Calu3 (cell line): ENCODE measurements at regions of chr4 and their contacts with region 1.

Region 1: DNA sequence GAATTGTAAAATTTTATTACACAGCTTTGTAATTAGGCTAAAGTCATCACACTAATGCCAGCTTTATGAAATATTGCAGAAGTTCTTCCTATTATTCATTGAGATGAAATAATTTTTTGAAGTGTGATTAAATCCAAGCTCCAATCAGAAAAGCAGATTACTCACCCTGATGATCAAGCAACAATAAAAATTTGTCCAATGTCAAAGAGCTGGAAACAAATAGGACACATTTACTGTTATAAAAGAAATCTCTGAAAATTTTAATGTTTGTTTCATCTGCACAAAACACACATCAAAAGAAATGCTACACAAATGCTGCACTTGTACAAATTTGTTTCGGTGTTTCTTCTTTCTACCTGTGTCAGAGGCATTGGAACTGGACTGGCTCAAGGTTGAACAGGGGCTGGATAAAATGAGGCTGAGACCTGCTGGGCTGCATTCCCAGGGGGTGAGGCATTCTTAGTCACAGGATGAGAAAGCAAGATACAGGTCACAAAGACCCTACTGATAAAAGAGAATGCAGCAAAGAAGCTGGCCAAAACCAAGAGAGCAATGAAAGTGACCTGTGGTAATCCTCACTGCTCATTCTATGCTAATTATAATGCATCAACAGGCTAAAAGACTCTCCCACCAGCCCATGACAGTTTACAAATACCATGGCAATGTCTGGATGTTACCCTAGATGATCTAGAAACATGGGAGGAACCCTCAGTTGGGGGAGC is 78.3 kb downstream of the GASK1B start:
- DNase-seq: peak; percentile 83
- H3K4me3 Mint-ChIP-seq: peak overlapping the region; percentile 53
- H3K27ac Mint-ChIP-seq: peak overlapping the region; percentile 75
- H3K4me1 Mint-ChIP-seq: peaks cover 9% of the 10 kb centered on the region
- H3K27me3 Mint-ChIP-seq: no peaks in the 10 kb centered on the region
- CTCF ChIP-seq: no peak

Region 2: DNA sequence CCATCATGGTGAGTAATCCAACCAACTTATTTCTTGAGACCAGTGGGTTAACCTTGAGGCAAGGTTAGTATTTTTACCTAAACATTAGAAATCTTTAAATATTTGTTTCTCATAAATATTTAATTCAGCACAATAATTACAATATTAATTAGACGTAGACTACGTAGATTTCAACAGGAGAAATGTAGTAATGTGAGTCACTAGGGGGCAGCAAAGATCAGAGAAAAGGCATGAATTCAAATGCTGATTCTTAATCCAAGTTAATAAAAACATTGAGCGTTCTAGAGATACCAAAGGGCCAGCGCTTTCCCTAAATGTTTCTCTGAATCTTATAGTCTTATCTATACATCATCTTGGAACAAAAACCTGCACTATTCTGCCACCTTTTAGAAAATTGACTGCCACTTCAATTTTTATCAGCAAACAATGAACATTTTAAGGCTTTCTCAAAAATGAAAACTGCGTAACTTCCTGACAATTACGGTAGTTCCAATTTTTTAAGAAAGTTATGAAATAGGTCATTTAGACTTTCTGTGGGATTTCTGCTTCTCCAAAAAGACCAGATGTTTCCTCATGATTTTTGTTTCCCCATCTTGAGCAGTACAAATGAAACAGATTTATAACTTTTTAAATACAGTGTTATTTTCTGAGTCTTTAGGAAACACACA is 102.4 kb before region 1 on chr4:
- CTCF ChIA-PET with region 1: no interaction called
- intact Hi-C with region 1: loop called (anchors 5 kb)
- DNase-seq: peak; percentile 60
- H3K4me3 Mint-ChIP-seq: no peak overlapping the region
- H3K27ac Mint-ChIP-seq: no peak overlapping the region
- H3K4me1 Mint-ChIP-seq: peaks cover 11% of the 10 kb centered on the region
- H3K27me3 Mint-ChIP-seq: no peaks in the 10 kb centered on the region
- CTCF ChIP-seq: peak; percentile 29

Region 3: GRCh38 chr4:158033416-158034120 is 61.0 kb before region 1 on chr4:
- CTCF ChIA-PET with region 1: no interaction called
- intact Hi-C with region 1: loop called (anchors 5 kb)
- DNase-seq: peak; percentile 4
- H3K4me3 Mint-ChIP-seq: peak overlapping the region; percentile 59
- H3K27ac Mint-ChIP-seq: peak overlapping the region; percentile 87
- H3K4me1 Mint-ChIP-seq: peaks cover 15% of the 10 kb centered on the region
- H3K27me3 Mint-ChIP-seq: no peaks in the 10 kb centered on the region
- CTCF ChIP-seq: no peak

Region 4: GRCh38 chr4:158172261-158173258 is 78.0 kb after region 1 on chr4 and contains the start of gene GASK1B:
- CTCF ChIA-PET with region 1: no interaction called
- intact Hi-C with region 1: loop called (anchors 5 kb)
- DNase-seq: peak; percentile 28
- H3K4me3 Mint-ChIP-seq: peak within 1 kb of the TSS; percentile 48
- H3K27ac Mint-ChIP-seq: peak within 1 kb of the TSS; percentile 63
- H3K4me1 Mint-ChIP-seq: peaks cover 36% of the 10 kb centered on the region
- H3K27me3 Mint-ChIP-seq: no peaks in the 10 kb centered on the region
- CTCF ChIP-seq: no peak
- total RNA-seq, gene GASK1B: 1.4 and 2.3 TPM in 2 replicates

Region 5: DNA sequence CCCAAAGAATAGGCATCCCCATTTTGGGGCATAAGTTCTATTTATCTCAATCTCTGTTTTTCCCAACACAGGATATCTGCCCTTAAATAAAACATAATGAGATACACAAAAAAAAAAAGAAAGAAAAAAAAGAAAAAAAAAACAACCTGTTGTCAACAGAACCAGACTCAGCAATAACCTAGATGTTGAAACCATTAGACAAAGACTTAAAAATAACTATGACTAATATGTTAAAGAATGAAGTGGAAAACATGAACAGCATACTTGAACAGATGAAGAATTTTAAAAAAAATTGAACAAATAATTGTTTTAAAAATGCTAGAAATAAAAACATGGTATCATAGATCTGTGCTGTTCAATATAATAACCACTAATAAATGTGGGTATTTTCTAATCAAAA is 333.7 kb after region 1 on chr4:
- CTCF ChIA-PET with region 1: no interaction called
- intact Hi-C with region 1: no loop called
- DNase-seq: no peak
- H3K4me3 Mint-ChIP-seq: no peak overlapping the region
- H3K27ac Mint-ChIP-seq: no peak overlapping the region
- H3K4me1 Mint-ChIP-seq: no peaks in the 10 kb centered on the region
- H3K27me3 Mint-ChIP-seq: no peaks in the 10 kb centered on the region
- CTCF ChIP-seq: no peak